ENCODE measurements at regions of chr12 and their contacts with region 1.

Region 1: DNA sequence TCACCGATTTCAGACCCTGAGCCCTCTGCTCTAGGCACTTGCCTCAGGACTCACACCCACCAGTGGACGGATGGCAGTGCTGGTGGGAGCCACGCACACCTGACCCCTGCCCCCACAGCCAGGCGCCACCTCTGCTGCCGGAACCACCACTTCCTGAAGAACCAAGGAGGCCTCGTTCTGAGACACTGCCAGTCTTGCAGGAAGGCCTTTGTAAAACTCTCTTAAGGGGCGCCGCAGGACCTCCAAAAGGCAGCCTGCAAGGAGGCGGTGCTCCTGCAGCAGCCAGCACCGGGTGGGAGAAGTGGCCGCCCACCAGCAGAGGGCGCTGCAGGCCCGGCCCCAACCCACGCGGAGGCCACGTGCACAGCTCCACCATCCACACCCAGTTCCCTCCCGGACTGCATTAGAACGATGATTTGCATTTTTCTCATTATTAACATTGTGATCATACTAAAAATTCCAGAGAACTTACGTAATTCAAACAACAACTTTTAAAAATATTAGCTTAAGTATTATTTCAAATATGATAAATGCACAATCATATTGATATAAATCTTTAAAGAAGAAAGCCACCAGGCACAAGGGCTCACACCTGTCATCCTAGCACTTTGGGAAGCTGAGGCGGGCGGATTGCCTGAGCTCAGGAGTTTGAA is 12.8 kb downstream of the STX2 start:
- DNase-seq: peak; percentile 68
- H3K4me3 Mint-ChIP-seq: no peak overlapping the region
- H3K27ac Mint-ChIP-seq: no peak overlapping the region
- H3K4me1 Mint-ChIP-seq: peaks cover 24% of the 10 kb centered on the region
- H3K27me3 Mint-ChIP-seq: no peaks in the 10 kb centered on the region

Region 2: DNA sequence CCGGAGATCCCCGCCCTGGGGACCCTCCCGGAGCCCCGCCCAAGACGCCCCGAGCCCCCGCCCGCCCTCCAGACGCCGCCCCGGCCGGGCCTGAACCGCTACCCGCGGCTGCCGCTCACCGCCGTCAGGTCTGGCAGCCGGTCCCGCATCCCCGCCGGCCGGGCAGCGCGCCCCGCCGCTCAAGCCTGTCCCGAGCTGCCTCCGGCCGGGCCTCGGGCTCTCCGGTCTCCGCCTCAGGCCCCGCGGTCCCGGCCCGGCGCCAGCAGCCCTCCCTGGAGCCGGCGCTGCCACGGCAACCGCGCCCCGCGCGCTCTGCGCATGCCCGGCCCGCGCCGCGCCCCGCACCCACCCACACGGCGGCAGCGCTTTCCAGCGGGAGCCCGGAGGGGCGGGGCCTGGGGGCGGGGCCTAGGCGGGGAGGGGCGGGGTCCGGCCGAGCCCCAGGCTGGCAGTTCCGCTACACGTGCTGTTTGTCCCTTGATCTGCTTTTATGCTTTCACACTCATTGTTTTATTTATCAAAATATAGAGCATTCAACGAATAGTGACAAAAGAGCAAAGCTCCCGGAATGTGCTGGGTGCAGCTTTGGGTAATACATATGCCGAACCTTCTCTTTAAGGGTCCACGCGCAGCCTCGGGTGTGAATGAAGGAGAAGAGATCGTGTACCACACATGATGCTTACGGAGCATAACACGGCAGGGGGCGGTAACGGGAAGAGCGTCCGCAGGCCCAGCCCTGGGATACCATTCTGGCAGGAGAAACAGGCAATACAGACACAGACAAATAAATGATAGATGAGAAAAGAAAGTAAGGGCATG is 12.9 kb after region 1 on chr12 and contains the start of gene STX2:
- CTCF ChIA-PET with region 1: interaction called, 27 read pairs
- POLR2A ChIA-PET with region 1: no interaction called
- DNase-seq: peak; percentile 85
- H3K4me3 Mint-ChIP-seq: peak within 1 kb of the TSS; percentile 82
- H3K27ac Mint-ChIP-seq: peak within 1 kb of the TSS; percentile 81
- H3K4me1 Mint-ChIP-seq: peaks cover 34% of the 10 kb centered on the region
- H3K27me3 Mint-ChIP-seq: no peaks in the 10 kb centered on the region
- total RNA-seq, gene STX2: 23.2 to 25.5 TPM

Region 3: DNA sequence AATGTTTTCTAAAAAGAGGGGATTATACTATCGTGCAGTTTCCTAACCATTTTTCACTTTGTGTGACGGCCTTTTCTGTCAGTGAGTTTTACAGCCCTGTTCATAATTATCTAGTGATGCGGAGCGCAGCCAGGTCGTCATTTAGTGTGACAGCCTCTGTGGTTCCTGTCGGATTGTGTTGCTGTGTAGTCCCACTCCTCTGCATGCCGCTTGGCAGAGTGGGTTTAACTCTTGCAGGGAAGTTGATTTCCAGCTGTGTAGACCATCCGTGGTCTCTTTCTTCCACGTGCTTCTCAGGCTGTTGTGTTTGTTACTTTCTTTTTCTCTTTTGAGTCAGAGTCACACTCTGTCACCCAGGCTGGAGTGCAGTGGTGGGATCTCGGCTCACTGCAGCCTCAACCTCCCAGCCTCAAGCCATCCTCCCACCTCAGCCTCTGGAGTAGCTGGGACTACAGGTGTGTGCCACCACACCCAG is 54.2 kb after region 1 on chr12:
- CTCF ChIA-PET with region 1: no interaction called
- POLR2A ChIA-PET with region 1: no interaction called
- DNase-seq: peak; percentile 20
- H3K4me3 Mint-ChIP-seq: peak overlapping the region; percentile 60
- H3K27ac Mint-ChIP-seq: peak overlapping the region; percentile 85
- H3K4me1 Mint-ChIP-seq: peaks cover 41% of the 10 kb centered on the region
- H3K27me3 Mint-ChIP-seq: no peaks in the 10 kb centered on the region

Region 4: DNA sequence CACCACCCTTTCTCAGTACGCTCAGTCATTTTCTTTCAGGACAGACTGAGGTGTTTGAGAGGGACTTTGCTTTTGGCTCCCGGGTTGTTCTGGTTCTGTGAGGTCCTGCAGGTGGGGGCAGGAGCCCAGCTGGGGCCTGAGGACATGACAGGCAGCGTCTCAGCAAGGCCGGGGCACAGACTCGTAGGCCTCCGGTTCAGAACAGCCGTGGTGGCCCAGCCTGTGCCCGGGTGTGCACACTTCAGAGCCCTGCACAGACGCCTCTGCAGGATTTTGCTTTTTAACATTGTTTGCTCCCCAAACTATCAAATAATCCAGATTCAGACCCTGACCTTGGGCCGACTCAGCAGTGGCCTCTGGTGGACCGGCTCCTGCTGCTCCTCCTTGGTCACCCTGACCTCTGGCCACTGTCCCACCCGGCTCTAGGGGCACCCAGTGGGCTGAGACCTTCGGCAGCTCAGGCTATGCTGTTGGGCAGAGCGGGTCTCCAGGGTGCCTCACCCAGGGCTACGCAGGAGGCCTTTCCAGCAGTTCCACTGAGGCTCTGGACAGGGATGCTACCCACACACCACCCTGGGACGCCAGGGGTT is 192.6 kb after region 1 on chr12:
- CTCF ChIA-PET with region 1: no interaction called
- POLR2A ChIA-PET with region 1: no interaction called
- DNase-seq: no peak
- H3K4me3 Mint-ChIP-seq: no peak overlapping the region
- H3K27ac Mint-ChIP-seq: no peak overlapping the region
- H3K4me1 Mint-ChIP-seq: no peaks in the 10 kb centered on the region
- H3K27me3 Mint-ChIP-seq: no peaks in the 10 kb centered on the region

Region 5: DNA sequence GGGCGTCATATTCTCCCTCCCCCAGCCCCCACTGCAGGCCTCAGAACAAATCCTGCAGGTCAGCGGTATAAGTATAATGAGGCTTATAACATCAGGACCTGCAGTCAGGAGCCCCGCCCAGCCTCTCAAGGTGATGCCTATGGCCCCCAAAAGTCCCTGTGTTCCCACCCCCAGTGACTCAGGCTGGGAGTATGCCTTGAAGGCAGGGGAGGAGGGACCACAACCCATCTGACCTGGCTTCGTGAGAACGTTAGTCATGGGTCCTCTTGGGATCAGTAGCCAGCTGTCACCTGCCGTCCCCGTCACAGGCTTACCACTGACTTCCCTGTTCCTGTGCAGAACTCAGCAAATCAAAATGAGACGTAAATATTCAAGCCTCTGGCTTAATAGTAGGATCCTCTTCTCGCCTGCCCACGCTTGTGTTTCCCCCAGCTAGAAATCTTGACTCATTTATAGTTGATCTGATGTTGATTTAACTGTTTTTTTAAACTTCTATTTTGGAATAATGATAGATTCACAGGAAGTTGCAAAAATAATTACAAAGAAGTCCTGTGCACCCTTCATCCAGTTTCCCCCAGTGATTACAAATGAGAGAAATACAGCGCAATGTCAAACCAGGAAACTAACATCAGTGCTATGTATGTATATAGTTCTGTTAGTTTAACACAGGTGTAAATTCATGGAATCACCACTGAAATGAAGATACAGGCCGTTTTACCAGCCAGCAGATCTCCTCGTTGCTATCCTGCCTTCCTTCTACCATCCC is 234.9 kb after region 1 on chr12:
- CTCF ChIA-PET with region 1: no interaction called
- POLR2A ChIA-PET with region 1: no interaction called
- DNase-seq: no peak
- H3K4me3 Mint-ChIP-seq: no peak overlapping the region
- H3K27ac Mint-ChIP-seq: no peak overlapping the region
- H3K4me1 Mint-ChIP-seq: no peaks in the 10 kb centered on the region
- H3K27me3 Mint-ChIP-seq: peaks cover 13% of the 10 kb centered on the region